ENCODE measurements at regions of chr9 and their contacts with region 1.

Region 1: DNA sequence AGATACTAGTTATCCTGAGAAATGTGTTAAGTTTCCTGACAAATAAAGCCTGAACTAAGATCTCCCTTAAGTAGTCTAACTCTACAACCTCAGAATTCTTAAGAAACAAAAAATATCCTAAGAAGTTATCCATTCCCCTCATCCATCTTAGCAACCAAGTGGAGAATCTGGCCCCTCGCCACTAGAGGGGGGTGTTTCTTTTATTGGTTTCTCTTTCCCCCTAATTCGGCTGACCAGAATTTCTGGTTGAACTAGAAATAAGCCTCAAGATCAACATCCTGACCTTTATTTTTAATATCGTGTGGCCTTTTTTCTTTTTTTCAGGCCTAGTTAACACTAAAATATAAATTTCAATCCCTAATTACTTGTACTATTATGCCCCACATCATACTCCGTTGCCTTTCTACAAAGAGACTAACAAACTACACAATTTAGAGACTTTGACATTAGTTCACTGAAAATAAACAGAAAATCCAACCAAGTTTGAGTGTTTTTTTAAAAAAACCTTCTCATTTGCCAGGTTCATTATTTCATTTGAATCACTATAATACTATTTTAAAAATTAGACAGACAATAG is 14.3 kb upstream of the NR4A3 start:
- DNase-seq: no peak
- ATAC-seq: peak; percentile 87
- H3K4me3 ChIP-seq: no peak overlapping the region
- H3K27ac ChIP-seq: no peak overlapping the region
- H3K4me1 ChIP-seq: peaks cover 6% of the 10 kb centered on the region
- H3K27me3 ChIP-seq: no peaks in the 10 kb centered on the region
- CTCF ChIP-seq: peak; percentile 73 to 81 (median 75)
- EP300 ChIP-seq: no peak
- POLR2A ChIP-seq: no peak
- RAD21 ChIP-seq: peak; percentile 89

Region 2: GRCh38 chr9:99851500-99851822 is 44.1 kb after region 1 on chr9:
- CTCF ChIA-PET with region 1: no interaction called
- POLR2A ChIA-PET with region 1: no interaction called
- RAD21 ChIA-PET with region 1: no interaction called
- SMC1A ChIA-PET with region 1: no interaction called
- in situ Hi-C with region 1: no loop called
- intact Hi-C with region 1: no loop called
- DNase-seq: peak; percentile 59
- ATAC-seq: peak; percentile 95
- H3K4me3 ChIP-seq: no peak overlapping the region
- H3K27ac ChIP-seq: 0 out of 2 replicates have a peak overlapping the region, but pooled peaks have one; percentile 18
- H3K4me1 ChIP-seq: peaks cover 18% of the 10 kb centered on the region
- H3K27me3 ChIP-seq: no peaks in the 10 kb centered on the region
- CTCF ChIP-seq: no peak
- EP300 ChIP-seq: 0 out of 4 replicates have a peak, but pooled peaks of 1 of the 2 experiments have one; percentile 39
- POLR2A ChIP-seq: no peak
- RAD21 ChIP-seq: no peak

Region 3: GRCh38 chr9:100011062-100011681 is 203.8 kb after region 1 on chr9:
- CTCF ChIA-PET with region 1: interaction called, 4 read pairs
- POLR2A ChIA-PET with region 1: no interaction called
- RAD21 ChIA-PET with region 1: interaction called, 4 read pairs
- SMC1A ChIA-PET with region 1: interaction called, 6 read pairs
- in situ Hi-C with region 1: loop called (anchors 25 kb)
- intact Hi-C with region 1: loop called (anchors 2 kb)
- DNase-seq: peak; percentile 38
- ATAC-seq: peak; percentile 73
- H3K4me3 ChIP-seq: no peak overlapping the region
- H3K27ac ChIP-seq: no peak overlapping the region
- H3K4me1 ChIP-seq: no peaks in the 10 kb centered on the region
- H3K27me3 ChIP-seq: no peaks in the 10 kb centered on the region
- CTCF ChIP-seq: peak; percentile 48 to 58 (median 56)
- EP300 ChIP-seq: no peak
- POLR2A ChIP-seq: no peak
- RAD21 ChIP-seq: peak; percentile 76

Region 4: GRCh38 chr9:100052375-100052774 is 245.0 kb after region 1 on chr9:
- CTCF ChIA-PET with region 1: no interaction called
- POLR2A ChIA-PET with region 1: no interaction called
- RAD21 ChIA-PET with region 1: no interaction called
- SMC1A ChIA-PET with region 1: no interaction called
- in situ Hi-C with region 1: no loop called
- intact Hi-C with region 1: no loop called
- DNase-seq: no peak
- ATAC-seq: no peak
- H3K4me3 ChIP-seq: no peak overlapping the region
- H3K27ac ChIP-seq: no peak overlapping the region
- H3K4me1 ChIP-seq: peaks cover 2% of the 10 kb centered on the region; the same call in 1 of the 2 replicates
- H3K27me3 ChIP-seq: no peaks in the 10 kb centered on the region
- CTCF ChIP-seq: no peak
- EP300 ChIP-seq: no peak
- POLR2A ChIP-seq: no peak
- RAD21 ChIP-seq: no peak

Measured in GM12878 (cell line).